Naive thymus-derived CD8-positive, alpha-beta T cell (primary cell): ENCODE measurements at regions of chr11 and their contacts with region 1.

Region 1: GRCh38 chr11:6402561-6402981 is 12.3 kb downstream of the SMPD1 start:
- DNase-seq: peak; percentile 54 to 98 (median 89)
- ATAC-seq: peak; percentile 89 to 90
- H3K4me3 Mint-ChIP-seq: peak overlapping the region; percentile 74 to 97 (median 86)
- H3K27ac Mint-ChIP-seq: peak overlapping the region; percentile 89 to 99 (median 98)
- H3K4me1 Mint-ChIP-seq: peaks cover 68 to 100% (median 93%) of the 10 kb centered on the region in 4 donors
- H3K27me3 Mint-ChIP-seq: peaks cover 0 to 2% (median 0%) of the 10 kb centered on the region in 5 donors

Region 2: GRCh38 chr11:6377902-6378639 is 24.5 kb before region 1 on chr11:
- POLR2A ChIA-PET with region 1: interaction called, 102 read pairs
- DNase-seq: peak in 3 of 10 donors; percentile 10 to 43 (median 42)
- ATAC-seq: peak; percentile 86 to 92
- H3K4me3 Mint-ChIP-seq: peak overlapping the region; percentile 53 to 84 (median 70)
- H3K27ac Mint-ChIP-seq: peak overlapping the region; percentile 46 to 96 (median 92)
- H3K4me1 Mint-ChIP-seq: peaks cover 21 to 37% (median 33%) of the 10 kb centered on the region in 4 donors
- H3K27me3 Mint-ChIP-seq: no peaks in the 10 kb centered on the region

Region 3: DNA sequence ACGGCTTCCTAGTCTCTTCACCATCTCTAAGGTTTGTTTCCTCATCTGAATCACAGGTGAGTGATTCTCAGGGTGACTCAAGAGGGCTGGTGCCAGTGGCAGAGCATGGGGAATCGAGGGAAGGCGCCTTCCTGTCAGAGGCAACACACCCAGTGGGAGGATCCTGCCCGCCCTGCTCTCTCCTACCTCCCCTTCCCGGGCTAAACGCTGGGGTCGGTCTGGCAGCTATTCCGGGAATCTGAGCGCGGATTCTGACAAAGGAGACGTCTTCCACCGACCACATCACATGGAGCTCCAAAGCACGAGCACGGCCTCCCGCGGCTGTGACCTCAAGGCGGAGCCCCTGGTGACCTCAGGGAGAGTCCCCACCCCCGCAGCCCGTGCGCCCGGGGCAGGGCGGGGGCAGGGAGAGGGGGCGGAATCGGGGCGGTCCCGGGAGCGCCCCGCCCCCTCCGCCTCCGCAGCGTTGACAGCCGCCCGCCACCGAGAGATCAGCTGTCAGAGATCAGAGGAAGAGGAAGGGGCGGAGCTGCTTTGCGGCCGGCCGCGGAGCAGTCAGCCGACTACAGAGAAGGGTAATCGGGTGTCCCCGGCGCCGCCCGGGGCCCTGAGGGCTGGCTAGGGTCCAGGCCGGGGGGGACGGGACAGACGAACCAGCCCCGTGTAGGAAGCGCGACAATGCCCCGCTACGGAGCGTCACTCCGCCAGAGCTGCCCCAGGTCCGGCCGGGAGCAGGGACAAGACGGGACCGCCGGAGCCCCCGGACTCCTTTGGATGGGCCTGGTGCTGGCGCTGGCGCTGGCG is 12.4 kb before region 1 on chr11 and contains the start of gene SMPD1:
- POLR2A ChIA-PET with region 1: interaction called, 358 read pairs
- DNase-seq: peak; percentile 90 to 97 (median 92)
- ATAC-seq: peak; percentile 83 to 85
- H3K4me3 Mint-ChIP-seq: peak within 1 kb of the TSS; percentile 91 to 97 (median 93)
- H3K27ac Mint-ChIP-seq: peak within 1 kb of the TSS; percentile 96 to 99 (median 98)
- H3K4me1 Mint-ChIP-seq: peaks cover 35 to 82% (median 67%) of the 10 kb centered on the region in 4 donors
- H3K27me3 Mint-ChIP-seq: no peaks in the 10 kb centered on the region
- polyA plus RNA-seq, gene SMPD1: 22.4 to 32.6 (median 31.7) TPM

Region 4: GRCh38 chr11:6419009-6419631 is 16.5 kb after region 1 on chr11 and contains the start of gene APBB1:
- POLR2A ChIA-PET with region 1: interaction called, 421 read pairs
- DNase-seq: peak; percentile 63 to 85 (median 78)
- ATAC-seq: peak; percentile 64 to 73
- H3K4me3 Mint-ChIP-seq: peak within 1 kb of the TSS in 9 of 10 donors; percentile 76 to 89 (median 84)
- H3K27ac Mint-ChIP-seq: peak within 1 kb of the TSS in 9 of 10 donors; percentile 84 to 92 (median 91)
- H3K4me1 Mint-ChIP-seq: peaks cover 8 to 12% (median 10%) of the 10 kb centered on the region in 4 donors
- H3K27me3 Mint-ChIP-seq: peaks cover 0 to 22% (median 2%) of the 10 kb centered on the region in 5 donors
- polyA plus RNA-seq, gene APBB1: 115 to 196 (median 146) TPM

Region 5: DNA sequence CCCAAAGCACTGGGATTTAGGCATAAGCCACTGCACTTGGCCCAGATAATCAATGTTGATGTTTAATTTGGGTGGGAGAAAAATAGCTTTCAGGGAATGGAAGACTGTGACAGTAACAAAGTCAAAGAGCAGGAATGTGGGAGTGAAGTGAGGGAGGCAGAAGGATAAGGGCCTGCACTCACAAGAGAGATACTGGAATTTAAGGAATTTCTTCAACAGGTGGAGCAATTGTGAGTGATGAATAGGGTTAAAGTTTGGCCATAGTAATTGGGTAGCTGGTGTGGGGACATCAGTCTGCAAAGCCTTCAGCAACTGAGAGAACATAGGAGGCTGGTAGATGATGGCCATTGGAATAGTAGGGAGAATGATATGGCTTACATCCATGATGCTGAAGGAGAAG is 24.9 kb after region 1 on chr11:
- POLR2A ChIA-PET with region 1: interaction called, 421 read pairs
- DNase-seq: no peak
- ATAC-seq: no peak
- H3K4me3 Mint-ChIP-seq: no peak overlapping the region
- H3K27ac Mint-ChIP-seq: no peak overlapping the region
- H3K4me1 Mint-ChIP-seq: peaks cover 0 to 4% (median 0%) of the 10 kb centered on the region in 4 donors
- H3K27me3 Mint-ChIP-seq: peaks cover 0 to 16% (median 0%) of the 10 kb centered on the region in 5 donors

Region 6: GRCh38 chr11:6452219-6452618 is 49.6 kb after region 1 on chr11:
- POLR2A ChIA-PET with region 1: no interaction called
- DNase-seq: no peak
- ATAC-seq: no peak
- H3K4me3 Mint-ChIP-seq: no peak overlapping the region
- H3K27ac Mint-ChIP-seq: no peak overlapping the region
- H3K4me1 Mint-ChIP-seq: no peaks in the 10 kb centered on the region
- H3K27me3 Mint-ChIP-seq: no peaks in the 10 kb centered on the region